ENCODE measurements at regions of chr22 and their contacts with region 1.

Region 1: DNA sequence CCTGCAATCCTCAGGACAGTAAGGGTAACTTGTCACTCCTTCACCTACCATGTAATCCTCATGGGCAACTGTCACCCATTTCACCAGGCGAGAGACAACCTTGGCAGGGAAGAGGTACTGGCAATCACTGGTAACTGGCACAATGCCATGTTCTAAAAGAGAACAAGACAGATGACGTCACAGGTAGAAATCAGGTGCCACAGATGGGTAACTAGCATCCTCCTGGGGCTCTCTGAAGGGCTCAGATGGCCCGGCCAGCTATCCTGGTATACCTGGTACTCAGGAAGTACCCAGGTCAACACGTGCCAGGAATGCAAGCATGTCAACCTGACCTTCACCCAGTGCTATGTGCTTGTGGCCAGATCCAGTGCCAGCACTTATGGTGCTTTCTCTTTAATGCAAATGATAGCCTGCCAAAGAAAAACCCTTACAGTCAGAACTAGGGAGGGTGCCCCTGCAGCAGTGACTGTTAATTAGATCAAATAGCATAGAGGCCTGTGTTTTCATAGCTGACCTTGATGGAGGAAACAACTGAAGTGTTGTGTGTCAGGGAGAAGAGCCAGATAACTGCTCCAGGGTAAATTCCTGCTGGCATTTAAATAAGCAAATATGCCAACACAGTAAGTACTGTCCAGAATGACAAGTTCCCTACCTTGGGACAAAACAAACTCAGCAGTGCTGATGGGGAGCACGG is 36.2 kb downstream of the THOC5 start:
- DNase-seq: no peak

Region 2: DNA sequence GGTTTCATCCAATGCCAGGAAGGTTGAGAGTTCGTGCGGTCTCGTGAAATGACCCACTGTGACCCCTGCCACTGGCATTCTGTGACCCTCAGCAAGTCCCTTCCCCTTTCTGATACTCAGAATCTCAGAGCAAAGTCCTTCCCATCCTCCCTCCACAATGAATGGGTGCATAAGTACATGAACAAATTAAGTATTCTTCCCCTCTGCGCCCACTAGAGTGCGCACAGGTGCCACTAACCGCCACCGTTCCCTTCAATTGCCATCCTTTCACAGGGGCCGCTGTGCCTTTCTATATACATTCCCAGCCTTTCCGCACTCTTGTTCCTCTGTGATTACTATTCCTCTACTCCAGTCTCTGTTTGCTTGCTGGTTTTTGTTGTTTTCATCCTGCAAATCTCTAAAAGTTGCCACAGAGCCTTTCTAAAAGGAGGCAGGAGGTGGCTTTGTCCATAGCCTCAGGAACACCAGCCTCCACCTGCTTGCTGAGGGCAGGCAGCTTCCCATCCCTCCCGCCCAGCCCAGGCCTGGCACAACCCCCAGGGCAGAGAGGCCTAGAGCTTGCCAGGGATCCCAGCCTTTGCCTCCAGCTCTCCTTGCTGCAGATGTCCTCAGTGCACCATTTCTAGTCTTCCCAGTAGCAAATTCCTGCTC is 122.3 kb before region 1 on chr22:
- intact Hi-C with region 1: loop called (anchors 5 kb)
- DNase-seq: peak; percentile 82

Measured in cardiac septum (tissue), 1 donor.